HepG2 (cell line): ENCODE measurements at regions of chr11 and their contacts with region 1.

Region 1: DNA sequence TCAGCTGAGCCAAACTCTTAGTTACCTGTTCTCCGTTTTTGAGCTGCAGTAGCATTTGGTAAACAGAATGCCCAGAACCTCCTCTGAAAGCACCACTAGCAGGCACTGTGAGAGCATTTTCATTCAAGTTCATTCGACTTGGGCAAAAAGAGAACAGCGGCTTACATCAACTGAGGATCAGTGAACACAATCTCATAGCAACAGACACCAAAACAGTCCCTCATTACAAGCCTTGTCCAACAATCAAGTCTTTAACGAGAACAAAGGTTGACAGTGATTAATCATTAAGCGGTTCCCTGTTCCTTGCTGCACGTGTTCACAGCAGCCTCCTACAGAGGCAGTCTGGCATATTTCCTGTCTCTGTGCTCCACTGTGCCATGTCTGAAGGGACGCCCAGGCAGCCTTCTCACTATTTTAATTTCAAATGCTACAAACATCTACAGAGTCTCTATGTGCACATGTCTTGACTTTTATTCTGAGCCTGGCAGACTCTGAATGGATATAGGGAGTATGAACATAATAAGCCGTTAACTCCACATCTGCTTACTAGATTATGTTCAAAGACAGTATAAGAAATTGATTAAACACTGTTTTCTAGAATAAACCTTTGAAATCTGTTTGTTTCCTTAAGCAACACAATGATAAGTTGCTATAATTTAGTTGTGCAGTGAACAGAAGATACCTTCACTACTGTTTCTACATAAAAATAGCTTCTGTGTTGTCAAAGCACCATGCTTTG is 88.3 kb upstream of the MTMR2 start:
- DNase-seq: peak; percentile 99
- ATAC-seq: peak; percentile 91
- H3K4me3 ChIP-seq: no peak overlapping the region
- H3K27ac ChIP-seq: peak overlapping the region; percentile 97
- H3K4me1 ChIP-seq: peaks cover 80% of the 10 kb centered on the region
- H3K27me3 ChIP-seq: no peaks in the 10 kb centered on the region
- CTCF ChIP-seq: peak; percentile 92
- EP300 ChIP-seq: peak; percentile 87 to 95; a peak in 3 of 4 replicates
- POLR2A ChIP-seq: peak; percentile 32 to 56; a peak in 2 of 4 replicates
- RAD21 ChIP-seq: peak; percentile 88

Region 2: GRCh38 chr11:94481342-94481741 is 1530.9 kb before region 1 on chr11:
- CTCF ChIA-PET with region 1: no interaction called
- POLR2A ChIA-PET with region 1: no interaction called
- in situ Hi-C with region 1: no loop called
- intact Hi-C with region 1: no loop called
- DNase-seq: no peak
- ATAC-seq: no peak
- H3K4me3 ChIP-seq: no peak overlapping the region
- H3K27ac ChIP-seq: no peak overlapping the region
- H3K4me1 ChIP-seq: no peaks in the 10 kb centered on the region
- H3K27me3 ChIP-seq: no peaks in the 10 kb centered on the region
- CTCF ChIP-seq: no peak
- EP300 ChIP-seq: no peak
- POLR2A ChIP-seq: no peak
- RAD21 ChIP-seq: no peak

Region 3: GRCh38 chr11:95923728-95924413 is 88.4 kb before region 1 on chr11 and contains the start of gene MTMR2:
- CTCF ChIA-PET with region 1: no interaction called
- POLR2A ChIA-PET with region 1: interaction called, 3 read pairs
- in situ Hi-C with region 1: no loop called
- intact Hi-C with region 1: loop called (anchors 10 kb)
- DNase-seq: peak; percentile 57
- ATAC-seq: peak; percentile 100
- H3K4me3 ChIP-seq: peak within 1 kb of the TSS; percentile 91 to 93 (median 93)
- H3K27ac ChIP-seq: peak within 1 kb of the TSS; percentile 85
- H3K4me1 ChIP-seq: peaks cover 35% of the 10 kb centered on the region
- H3K27me3 ChIP-seq: no peaks in the 10 kb centered on the region; a peak in 1 of 5 replicates
- CTCF ChIP-seq: peak; percentile 24
- EP300 ChIP-seq: no peak; a peak in 1 of 4 replicates
- POLR2A ChIP-seq: peak; percentile 79 to 95
- RAD21 ChIP-seq: peak; percentile 56; the same call in 1 of the 2 replicates
- total RNA-seq, gene MTMR2: 22.3 and 38.2 TPM in 2 replicates

Region 4: DNA sequence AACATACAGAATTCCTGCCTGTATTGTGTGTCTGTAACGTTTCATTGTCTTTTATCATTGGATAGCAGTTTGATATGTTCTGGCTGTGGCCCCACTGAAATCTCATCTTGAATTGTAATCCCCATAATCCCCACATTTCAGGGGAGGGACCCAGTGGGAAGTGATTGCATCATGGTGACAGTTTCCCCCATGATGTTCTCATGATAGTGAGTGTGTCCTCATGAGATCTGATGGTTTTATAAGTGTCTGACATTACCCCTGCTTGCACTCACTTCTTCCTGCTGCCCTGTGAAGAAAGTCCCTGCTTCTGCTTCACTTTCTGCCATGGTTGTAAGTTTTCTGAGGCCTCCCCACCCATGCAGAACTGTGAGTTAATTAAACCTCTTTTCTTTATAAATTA is 68.7 kb before region 1 on chr11:
- CTCF ChIA-PET with region 1: no interaction called
- POLR2A ChIA-PET with region 1: no interaction called
- in situ Hi-C with region 1: no loop called
- intact Hi-C with region 1: no loop called
- DNase-seq: no peak
- ATAC-seq: no peak
- H3K4me3 ChIP-seq: no peak overlapping the region
- H3K27ac ChIP-seq: no peak overlapping the region
- H3K4me1 ChIP-seq: no peaks in the 10 kb centered on the region
- H3K27me3 ChIP-seq: no peaks in the 10 kb centered on the region; a peak in 2 of 5 replicates
- CTCF ChIP-seq: no peak
- EP300 ChIP-seq: no peak
- POLR2A ChIP-seq: no peak
- RAD21 ChIP-seq: no peak

Region 5: DNA sequence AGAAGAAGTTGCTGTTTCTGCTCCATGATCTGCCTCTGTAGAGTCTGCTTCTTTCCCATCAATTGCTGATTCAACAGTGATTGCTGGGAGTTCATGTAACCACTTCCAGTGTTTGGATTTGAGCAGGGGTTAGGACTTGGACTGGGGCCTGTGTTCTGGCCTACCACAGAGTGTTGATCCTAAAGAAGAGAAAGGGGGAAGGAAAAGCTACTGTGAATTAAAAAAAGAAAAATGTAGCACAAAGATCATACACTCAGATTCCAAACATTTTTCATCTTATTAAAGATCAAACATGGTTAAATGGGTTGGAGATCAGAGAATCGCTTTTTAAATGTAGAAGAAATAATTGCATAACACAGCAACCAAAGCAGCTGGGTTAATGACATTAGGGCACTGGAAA is 20.7 kb before region 1 on chr11:
- CTCF ChIA-PET with region 1: no interaction called
- POLR2A ChIA-PET with region 1: no interaction called
- in situ Hi-C with region 1: no loop called
- intact Hi-C with region 1: no loop called
- DNase-seq: no peak
- ATAC-seq: no peak
- H3K4me3 ChIP-seq: no peak overlapping the region
- H3K27ac ChIP-seq: no peak overlapping the region
- H3K4me1 ChIP-seq: peaks cover 23% of the 10 kb centered on the region
- H3K27me3 ChIP-seq: no peaks in the 10 kb centered on the region
- CTCF ChIP-seq: no peak
- EP300 ChIP-seq: no peak
- POLR2A ChIP-seq: no peak
- RAD21 ChIP-seq: no peak

Region 6: GRCh38 chr11:96054870-96055705 is 42.8 kb after region 1 on chr11:
- CTCF ChIA-PET with region 1: no interaction called
- POLR2A ChIA-PET with region 1: interaction called, 3 read pairs
- in situ Hi-C with region 1: no loop called
- intact Hi-C with region 1: loop called (anchors 1 kb)
- DNase-seq: peak; percentile 44
- ATAC-seq: peak; percentile 47
- H3K4me3 ChIP-seq: no peak overlapping the region
- H3K27ac ChIP-seq: peak overlapping the region; percentile 7
- H3K4me1 ChIP-seq: peaks cover 57% of the 10 kb centered on the region
- H3K27me3 ChIP-seq: no peaks in the 10 kb centered on the region
- CTCF ChIP-seq: peak; percentile 65
- EP300 ChIP-seq: no peak
- POLR2A ChIP-seq: no peak
- RAD21 ChIP-seq: peak; percentile 50; the same call in 1 of the 2 replicates

Region 7: DNA sequence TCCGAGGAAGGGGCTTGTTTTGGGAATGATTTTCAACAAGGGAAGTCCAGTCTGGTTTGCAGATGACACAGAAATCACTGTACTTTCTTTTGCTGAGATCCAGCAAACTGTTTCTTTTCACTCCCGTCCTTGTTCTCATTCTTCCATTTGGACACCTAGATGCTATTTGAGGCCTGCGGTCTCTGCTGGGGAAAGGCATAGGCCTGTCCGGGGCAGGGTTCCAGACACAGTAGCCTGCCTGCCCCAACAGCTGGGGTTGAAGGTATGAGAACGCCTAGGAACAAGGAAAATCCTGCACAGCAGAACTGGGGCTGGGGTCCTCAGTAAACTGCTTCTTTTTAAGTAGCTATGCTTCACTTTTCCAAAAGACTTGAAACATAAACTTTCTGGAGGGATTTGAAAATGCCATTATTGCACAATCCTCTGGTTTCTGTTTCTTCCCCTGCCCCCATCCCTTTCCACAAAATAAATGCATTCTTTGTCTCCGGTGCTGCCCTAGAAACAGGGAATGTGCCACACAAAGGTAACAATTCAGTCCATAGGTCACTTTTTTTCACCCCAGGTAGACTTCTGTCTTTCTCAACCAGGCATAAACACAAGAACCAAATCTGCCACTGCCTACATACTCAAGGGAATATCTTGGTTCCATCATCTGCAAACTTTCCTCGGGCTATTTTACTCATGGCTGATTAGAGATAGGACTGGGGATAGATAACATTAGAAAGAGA is 86.4 kb after region 1 on chr11:
- CTCF ChIA-PET with region 1: no interaction called
- POLR2A ChIA-PET with region 1: no interaction called
- in situ Hi-C with region 1: no loop called
- intact Hi-C with region 1: loop called (anchors 1 kb)
- DNase-seq: peak; percentile 95
- ATAC-seq: peak; percentile 86
- H3K4me3 ChIP-seq: peak overlapping the region in 2 of 3 experiments; percentile 12 to 52; a peak in 3 of 6 replicates
- H3K27ac ChIP-seq: peak overlapping the region; percentile 92
- H3K4me1 ChIP-seq: peaks cover 82% of the 10 kb centered on the region
- H3K27me3 ChIP-seq: no peaks in the 10 kb centered on the region
- CTCF ChIP-seq: no peak
- EP300 ChIP-seq: peak; percentile 92
- POLR2A ChIP-seq: no peak
- RAD21 ChIP-seq: peak; percentile 10; the same call in 1 of the 2 replicates

Region 8: DNA sequence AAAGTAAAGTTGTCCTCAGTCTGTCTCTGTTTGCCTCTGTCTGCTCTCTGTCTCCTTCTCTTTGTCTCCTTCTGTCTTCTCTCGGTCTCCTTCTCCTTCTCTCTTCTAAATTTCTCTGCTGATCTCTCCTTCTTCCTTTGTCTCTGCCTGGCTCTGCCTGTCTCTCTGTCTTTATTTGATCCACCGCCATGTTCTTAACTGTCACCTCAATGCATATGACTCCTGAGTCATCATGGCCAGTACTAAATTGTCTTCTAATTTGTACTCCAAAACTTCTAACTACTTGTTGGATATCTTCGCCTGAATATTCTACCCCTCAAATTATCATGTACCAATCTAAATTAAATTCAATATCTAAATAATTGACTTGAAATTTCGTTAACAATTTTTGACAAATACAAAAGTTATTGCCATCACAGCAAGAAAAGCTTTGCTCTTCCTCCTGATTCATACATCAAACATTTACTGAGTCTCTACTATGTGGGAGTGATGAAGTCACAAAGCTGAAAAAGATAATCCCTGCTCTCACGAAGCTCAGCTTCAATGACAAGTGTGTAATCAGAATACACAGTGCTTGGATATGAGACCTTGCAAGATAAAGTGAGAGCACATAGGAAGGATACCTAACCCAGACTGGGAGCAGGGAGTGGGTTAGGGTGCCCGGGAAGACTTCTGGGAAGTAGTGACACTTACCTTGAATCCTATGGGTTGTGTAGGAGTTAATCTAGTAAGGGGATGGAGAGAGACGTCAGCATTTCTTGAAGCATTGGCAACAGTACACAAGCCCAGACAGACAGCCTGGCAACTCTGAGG is 137.7 kb after region 1 on chr11:
- CTCF ChIA-PET with region 1: no interaction called
- POLR2A ChIA-PET with region 1: no interaction called
- in situ Hi-C with region 1: loop called (anchors 5 kb)
- intact Hi-C with region 1: loop called (anchors 1 kb)
- DNase-seq: peak; percentile 48
- ATAC-seq: no peak; the same call in 2 of the 3 replicates
- H3K4me3 ChIP-seq: no peak overlapping the region
- H3K27ac ChIP-seq: no peak overlapping the region
- H3K4me1 ChIP-seq: peaks cover 63% of the 10 kb centered on the region
- H3K27me3 ChIP-seq: no peaks in the 10 kb centered on the region
- CTCF ChIP-seq: no peak
- EP300 ChIP-seq: no peak
- POLR2A ChIP-seq: no peak
- RAD21 ChIP-seq: no peak

Region 9: DNA sequence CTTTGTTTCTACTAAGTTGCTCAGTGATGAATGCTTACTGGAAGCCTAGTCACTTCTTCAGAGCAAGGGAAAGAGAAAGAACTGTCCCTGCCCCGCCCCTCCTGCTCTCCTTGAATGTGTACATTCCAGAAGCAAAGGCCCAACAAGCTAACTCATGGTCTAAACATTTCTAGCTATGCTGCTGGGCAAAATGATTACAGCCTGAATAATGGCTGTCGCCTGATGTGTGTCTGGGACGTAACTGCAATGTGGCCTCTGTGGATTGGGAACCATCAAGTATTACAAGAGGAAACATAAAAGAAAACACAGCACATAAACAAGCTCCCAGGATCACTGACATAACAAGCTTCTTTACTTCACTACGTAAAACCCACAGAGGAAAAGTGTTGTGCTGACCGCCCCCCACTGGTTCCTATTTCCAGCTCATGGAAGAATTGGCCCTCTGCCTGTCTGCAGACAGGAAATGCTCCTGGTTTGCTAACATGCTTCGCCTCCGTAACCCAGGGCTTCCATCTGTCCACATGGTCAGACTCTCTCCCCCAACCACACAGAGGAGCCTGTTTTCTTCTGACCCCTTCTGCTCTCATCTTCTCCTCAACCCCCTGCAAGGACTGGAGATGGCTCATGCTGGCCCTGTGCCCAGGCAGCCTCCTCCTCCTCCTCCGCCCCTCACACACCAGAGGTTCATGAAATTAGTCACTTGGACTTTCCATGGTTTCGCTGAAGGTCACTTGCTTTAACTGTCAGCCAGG is 143.5 kb after region 1 on chr11:
- CTCF ChIA-PET with region 1: no interaction called
- POLR2A ChIA-PET with region 1: interaction called, 4 read pairs
- in situ Hi-C with region 1: no loop called
- intact Hi-C with region 1: loop called (anchors 1 kb)
- DNase-seq: peak; percentile 64
- ATAC-seq: peak; percentile 83
- H3K4me3 ChIP-seq: no peak overlapping the region
- H3K27ac ChIP-seq: peak overlapping the region; percentile 60
- H3K4me1 ChIP-seq: peaks cover 47% of the 10 kb centered on the region
- H3K27me3 ChIP-seq: no peaks in the 10 kb centered on the region
- CTCF ChIP-seq: peak; percentile 54
- EP300 ChIP-seq: no peak
- POLR2A ChIP-seq: no peak
- RAD21 ChIP-seq: no peak

Region 10: GRCh38 chr11:96235751-96236150 is 223.5 kb after region 1 on chr11:
- CTCF ChIA-PET with region 1: no interaction called
- POLR2A ChIA-PET with region 1: no interaction called
- in situ Hi-C with region 1: loop called (anchors 5 kb)
- intact Hi-C with region 1: loop called (anchors 5 kb)
- DNase-seq: no peak
- ATAC-seq: no peak
- H3K4me3 ChIP-seq: no peak overlapping the region
- H3K27ac ChIP-seq: no peak overlapping the region
- H3K4me1 ChIP-seq: peaks cover 51% of the 10 kb centered on the region
- H3K27me3 ChIP-seq: no peaks in the 10 kb centered on the region
- CTCF ChIP-seq: no peak
- EP300 ChIP-seq: no peak
- POLR2A ChIP-seq: no peak
- RAD21 ChIP-seq: no peak